Activated B cell treated with CpG ODN at 0.5 μM for 24 hours (primary cell): ENCODE measurements at regions of chr6 and their contacts with region 1.

Region 1: GRCh38 chr6:83067448-83068413 is at the start of gene DOP1A:
- DNase-seq: peak; percentile 92
- ATAC-seq: peak; percentile 80
- H3K4me3 Mint-ChIP-seq: peak within 1 kb of the TSS; percentile 92
- H3K27ac Mint-ChIP-seq: peak within 1 kb of the TSS; percentile 92
- H3K4me1 Mint-ChIP-seq: peaks cover 56% of the 10 kb centered on the region
- H3K27me3 Mint-ChIP-seq: no peaks in the 10 kb centered on the region
- CTCF ChIP-seq: peak; percentile 85
- total RNA-seq, gene DOP1A: 24.2 and 30.8 TPM in 2 replicates

Region 2: GRCh38 chr6:82247634-82248232 is 820.0 kb before region 1 on chr6 and contains the start of gene IBTK:
- CTCF ChIA-PET with region 1: interaction called, 6 read pairs
- POLR2A ChIA-PET with region 1: interaction called, 5 read pairs
- intact Hi-C with region 1: loop called (anchors 1 kb)
- DNase-seq: peak; percentile 89
- ATAC-seq: peak; percentile 90
- H3K4me3 Mint-ChIP-seq: peak within 1 kb of the TSS; percentile 97
- H3K27ac Mint-ChIP-seq: peak within 1 kb of the TSS; percentile 93
- H3K4me1 Mint-ChIP-seq: peaks cover 33% of the 10 kb centered on the region
- H3K27me3 Mint-ChIP-seq: no peaks in the 10 kb centered on the region
- CTCF ChIP-seq: no peak
- total RNA-seq, gene IBTK: 25.6 and 30.1 TPM in 2 replicates

Region 3: GRCh38 chr6:83086751-83087150 is 19.0 kb after region 1 on chr6:
- CTCF ChIA-PET with region 1: interaction called, 3 read pairs
- POLR2A ChIA-PET with region 1: interaction called, 3 read pairs
- intact Hi-C with region 1: loop called (anchors 2 kb)
- DNase-seq: no peak
- ATAC-seq: no peak
- H3K4me3 Mint-ChIP-seq: peak overlapping the region; percentile 11
- H3K27ac Mint-ChIP-seq: no peak overlapping the region
- H3K4me1 Mint-ChIP-seq: peaks cover 21% of the 10 kb centered on the region
- H3K27me3 Mint-ChIP-seq: no peaks in the 10 kb centered on the region
- CTCF ChIP-seq: no peak

Region 4: DNA sequence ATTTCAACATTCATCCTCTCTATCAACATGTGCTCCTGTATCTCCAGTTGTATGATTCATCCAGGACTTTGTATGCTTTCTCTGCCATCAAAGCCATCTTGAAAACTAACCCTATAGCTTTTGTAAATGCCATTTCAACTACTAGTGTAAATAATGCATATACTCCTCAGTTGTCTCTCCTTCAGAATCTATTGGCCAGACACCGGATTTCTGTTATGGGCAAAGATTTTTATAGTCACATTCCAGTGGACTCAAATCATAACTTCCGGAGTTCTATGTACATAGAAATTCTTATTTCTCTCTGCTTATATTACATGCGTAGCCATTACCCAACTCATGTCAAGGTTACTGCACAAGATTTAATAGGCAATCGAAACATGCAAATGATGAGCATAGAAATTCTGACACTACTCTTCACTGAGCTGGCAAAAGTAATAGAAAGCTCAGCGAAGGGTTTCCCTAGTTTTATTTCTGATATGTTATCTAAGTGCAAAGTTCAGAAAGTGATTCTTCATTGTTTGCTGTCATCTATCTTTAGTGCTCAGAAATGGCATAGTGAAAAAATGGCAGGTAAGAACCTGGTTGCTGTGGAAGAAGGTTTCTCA is 70.5 kb after region 1 on chr6:
- CTCF ChIA-PET with region 1: interaction called, 6 read pairs
- POLR2A ChIA-PET with region 1: no interaction called
- intact Hi-C with region 1: loop called (anchors 5 kb)
- DNase-seq: no peak
- ATAC-seq: no peak
- H3K4me3 Mint-ChIP-seq: no peak overlapping the region
- H3K27ac Mint-ChIP-seq: no peak overlapping the region
- H3K4me1 Mint-ChIP-seq: no peaks in the 10 kb centered on the region
- H3K27me3 Mint-ChIP-seq: no peaks in the 10 kb centered on the region
- CTCF ChIP-seq: no peak

Region 5: DNA sequence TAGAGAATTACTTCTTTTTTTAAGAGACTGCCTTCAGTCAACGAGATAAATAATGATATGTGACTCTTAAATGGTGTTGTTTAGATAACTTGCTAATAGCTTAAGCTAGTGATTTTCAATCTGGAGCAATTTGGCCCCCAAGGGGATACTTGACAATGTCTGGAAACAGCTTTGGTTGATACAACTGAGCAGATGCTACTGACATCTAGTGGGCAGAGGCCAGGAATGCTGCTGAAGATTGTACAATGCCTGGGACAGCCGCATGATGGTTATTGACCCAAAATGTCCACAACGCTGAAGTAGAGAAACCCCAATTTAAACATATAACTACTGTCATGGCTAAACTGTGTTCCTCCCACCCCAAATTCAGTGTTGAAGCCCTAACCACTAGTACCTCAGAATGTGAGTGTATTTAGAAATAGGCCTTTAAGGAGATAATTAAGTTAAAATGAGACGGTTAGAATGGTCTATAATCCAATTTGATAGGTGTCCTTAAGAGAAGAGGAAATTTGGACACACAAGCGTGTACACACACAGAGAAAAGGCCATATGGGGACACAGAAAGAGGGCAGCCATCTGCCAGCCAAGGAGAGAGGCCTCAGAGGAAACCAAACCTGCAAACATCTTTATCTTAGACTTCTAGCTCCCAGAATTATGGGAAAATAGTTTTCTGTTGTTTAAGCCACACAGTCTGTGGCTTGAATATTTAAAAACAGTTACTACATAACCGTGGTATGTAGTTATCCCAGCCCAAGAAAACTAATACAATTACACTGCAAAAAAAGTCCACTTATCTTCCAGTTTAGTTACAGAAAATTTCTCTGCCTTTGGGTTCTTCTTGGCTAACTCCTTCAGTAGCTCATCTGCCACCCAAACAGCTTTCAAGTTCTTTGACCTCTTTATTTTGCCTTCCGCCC is 147.7 kb after region 1 on chr6:
- CTCF ChIA-PET with region 1: interaction called, 73 read pairs
- POLR2A ChIA-PET with region 1: interaction called, 8 read pairs
- intact Hi-C with region 1: loop called (anchors 1 kb)
- DNase-seq: no peak
- ATAC-seq: peak; percentile 98
- H3K4me3 Mint-ChIP-seq: no peak overlapping the region
- H3K27ac Mint-ChIP-seq: no peak overlapping the region
- H3K4me1 Mint-ChIP-seq: no peaks in the 10 kb centered on the region
- H3K27me3 Mint-ChIP-seq: peaks cover 14% of the 10 kb centered on the region
- CTCF ChIP-seq: peak; percentile 64

Region 6: GRCh38 chr6:83514866-83515466 is 447.2 kb after region 1 on chr6:
- CTCF ChIA-PET with region 1: interaction called, 29 read pairs
- POLR2A ChIA-PET with region 1: no interaction called
- intact Hi-C with region 1: loop called (anchors 1 kb)
- DNase-seq: no peak
- ATAC-seq: no peak
- H3K4me3 Mint-ChIP-seq: no peak overlapping the region
- H3K27ac Mint-ChIP-seq: no peak overlapping the region
- H3K4me1 Mint-ChIP-seq: peaks cover 9% of the 10 kb centered on the region
- H3K27me3 Mint-ChIP-seq: peaks cover 21% of the 10 kb centered on the region
- CTCF ChIP-seq: peak; percentile 68

Region 7: GRCh38 chr6:83884523-83884922 is 816.8 kb after region 1 on chr6:
- CTCF ChIA-PET with region 1: no interaction called
- POLR2A ChIA-PET with region 1: interaction called, 3 read pairs
- intact Hi-C with region 1: loop called (anchors 10 kb)
- DNase-seq: no peak
- ATAC-seq: peak; percentile 76
- H3K4me3 Mint-ChIP-seq: no peak overlapping the region
- H3K27ac Mint-ChIP-seq: no peak overlapping the region
- H3K4me1 Mint-ChIP-seq: peaks cover 45% of the 10 kb centered on the region
- H3K27me3 Mint-ChIP-seq: no peaks in the 10 kb centered on the region
- CTCF ChIP-seq: no peak